ENCODE measurements at regions of chr13 and their contacts with region 1.

Region 1: DNA sequence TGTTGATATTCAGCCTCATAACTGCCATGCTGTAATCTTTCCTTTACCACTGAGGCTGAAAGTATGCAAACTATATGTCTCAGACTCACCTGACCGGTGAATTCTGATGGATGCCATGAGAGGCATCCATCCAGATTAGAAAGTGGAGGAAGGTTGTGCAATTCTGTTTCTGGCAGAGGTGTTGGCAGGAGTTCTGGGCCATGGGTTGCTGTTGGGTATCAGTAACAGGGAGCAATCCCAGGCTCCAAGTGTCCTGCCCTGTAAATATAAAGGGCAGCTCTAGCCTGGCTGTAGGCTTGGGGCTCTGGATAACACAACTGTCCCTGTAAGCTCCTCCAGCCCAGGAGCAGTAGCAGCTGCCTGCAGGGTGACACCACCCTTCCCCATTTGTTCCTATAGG is 77.4 kb upstream of the ABCC4 start:
- DNase-seq: no peak
- ATAC-seq: no peak
- H3K4me3 Mint-ChIP-seq: no peak overlapping the region
- H3K27ac Mint-ChIP-seq: no peak overlapping the region
- H3K4me1 Mint-ChIP-seq: peaks cover 5% of the 10 kb centered on the region
- H3K27me3 Mint-ChIP-seq: peaks cover 32% of the 10 kb centered on the region
- CTCF ChIP-seq: no peak

Region 2: DNA sequence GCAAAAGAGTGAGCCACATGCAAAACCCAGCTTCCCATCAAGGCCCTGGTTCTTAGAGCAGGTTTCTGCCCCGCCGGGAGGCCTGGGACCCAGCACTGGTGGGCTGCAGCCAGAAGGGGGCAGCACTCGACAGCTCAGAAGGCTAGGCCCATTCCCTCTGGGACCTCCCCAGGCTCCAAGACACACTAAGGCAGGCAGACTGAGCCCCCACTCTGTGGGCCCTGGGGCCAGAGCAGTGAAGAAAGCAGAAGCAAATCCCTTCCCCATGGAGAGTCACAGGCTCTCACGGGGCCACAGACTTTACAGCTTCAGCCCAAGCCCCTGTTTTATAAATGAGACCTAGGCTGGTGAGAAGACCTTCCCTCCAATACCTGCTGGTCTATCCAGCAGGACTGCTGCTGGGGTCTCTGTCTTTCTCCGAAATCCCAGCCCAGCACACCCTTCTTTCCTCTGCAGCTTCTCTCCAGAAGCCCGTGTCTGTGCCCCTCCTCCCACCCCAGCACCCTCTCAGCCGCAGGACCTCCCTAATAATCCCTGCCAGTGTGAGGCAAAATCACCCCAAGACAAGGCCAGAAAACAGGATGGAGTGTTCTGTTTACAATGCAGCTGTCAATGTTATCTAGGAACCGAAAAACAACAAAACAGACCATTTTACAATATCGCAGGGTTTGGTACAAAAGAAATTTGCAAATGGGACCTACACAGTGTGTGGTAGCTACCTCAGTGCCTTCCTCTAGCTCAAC is 186.6 kb before region 1 on chr13:
- CTCF ChIA-PET with region 1: interaction called, 183 read pairs
- POLR2A ChIA-PET with region 1: interaction called, 10 read pairs
- intact Hi-C with region 1: loop called (anchors 1 kb)
- DNase-seq: peak; percentile 67
- ATAC-seq: peak; percentile 97
- H3K4me3 Mint-ChIP-seq: no peak overlapping the region
- H3K27ac Mint-ChIP-seq: no peak overlapping the region
- H3K4me1 Mint-ChIP-seq: peaks cover 1% of the 10 kb centered on the region
- H3K27me3 Mint-ChIP-seq: no peaks in the 10 kb centered on the region
- CTCF ChIP-seq: no peak

Region 3: GRCh38 chr13:95207769-95208366 is 170.7 kb before region 1 on chr13:
- CTCF ChIA-PET with region 1: no interaction called
- POLR2A ChIA-PET with region 1: no interaction called
- intact Hi-C with region 1: loop called (anchors 5 kb)
- DNase-seq: no peak
- ATAC-seq: peak; percentile 64
- H3K4me3 Mint-ChIP-seq: peak overlapping the region; percentile 57
- H3K27ac Mint-ChIP-seq: peak overlapping the region; percentile 13
- H3K4me1 Mint-ChIP-seq: peaks cover 9% of the 10 kb centered on the region
- H3K27me3 Mint-ChIP-seq: no peaks in the 10 kb centered on the region
- CTCF ChIP-seq: no peak

Region 4: GRCh38 chr13:95349267-95349666 is 29.3 kb before region 1 on chr13:
- CTCF ChIA-PET with region 1: no interaction called
- POLR2A ChIA-PET with region 1: no interaction called
- intact Hi-C with region 1: no loop called
- DNase-seq: no peak
- ATAC-seq: no peak
- H3K4me3 Mint-ChIP-seq: no peak overlapping the region
- H3K27ac Mint-ChIP-seq: no peak overlapping the region
- H3K4me1 Mint-ChIP-seq: no peaks in the 10 kb centered on the region
- H3K27me3 Mint-ChIP-seq: peaks cover 3% of the 10 kb centered on the region
- CTCF ChIP-seq: no peak